ENCODE measurements at regions of chr12 and their contacts with region 1.

Region 1: GRCh38 chr12:110896559-110896958 is 23.8 kb downstream of the MYL2 start:
- DNase-seq: no peak
- ATAC-seq: no peak
- H3K4me3 ChIP-seq: no peak overlapping the region
- H3K27ac ChIP-seq: no peak overlapping the region; a peak in 1 of 6 replicates
- H3K4me1 ChIP-seq: peaks cover 9% of the 10 kb centered on the region
- CTCF ChIP-seq: no peak
- EP300 ChIP-seq: no peak
- POLR2A ChIP-seq: no peak
- RAD21 ChIP-seq: no peak

Region 2: GRCh38 chr12:110826592-110827200 is 69.9 kb before region 1 on chr12:
- CTCF ChIA-PET with region 1: no interaction called
- POLR2A ChIA-PET with region 1: no interaction called
- DNase-seq: peak; percentile 78 to 94
- ATAC-seq: peak; percentile 95 to 98
- H3K4me3 ChIP-seq: no peak overlapping the region
- H3K27ac ChIP-seq: peak overlapping the region in 1 of 2 experiments; percentile 64; a peak in 1 of 6 replicates
- H3K4me1 ChIP-seq: no peaks in the 10 kb centered on the region
- CTCF ChIP-seq: peak; percentile 95
- EP300 ChIP-seq: no peak
- POLR2A ChIP-seq: no peak
- RAD21 ChIP-seq: peak; percentile 92 to 98

Region 3: GRCh38 chr12:110917466-110917865 is 20.9 kb after region 1 on chr12:
- CTCF ChIA-PET with region 1: interaction called, 10 read pairs
- POLR2A ChIA-PET with region 1: no interaction called
- DNase-seq: peak; percentile 70 to 82
- ATAC-seq: peak; percentile 80 to 85
- H3K4me3 ChIP-seq: no peak overlapping the region
- H3K27ac ChIP-seq: peak overlapping the region; percentile 69 to 84; a peak in 5 of 6 replicates
- H3K4me1 ChIP-seq: peaks cover 27% of the 10 kb centered on the region
- CTCF ChIP-seq: no peak
- EP300 ChIP-seq: no peak
- POLR2A ChIP-seq: no peak
- RAD21 ChIP-seq: no peak

Region 4: DNA sequence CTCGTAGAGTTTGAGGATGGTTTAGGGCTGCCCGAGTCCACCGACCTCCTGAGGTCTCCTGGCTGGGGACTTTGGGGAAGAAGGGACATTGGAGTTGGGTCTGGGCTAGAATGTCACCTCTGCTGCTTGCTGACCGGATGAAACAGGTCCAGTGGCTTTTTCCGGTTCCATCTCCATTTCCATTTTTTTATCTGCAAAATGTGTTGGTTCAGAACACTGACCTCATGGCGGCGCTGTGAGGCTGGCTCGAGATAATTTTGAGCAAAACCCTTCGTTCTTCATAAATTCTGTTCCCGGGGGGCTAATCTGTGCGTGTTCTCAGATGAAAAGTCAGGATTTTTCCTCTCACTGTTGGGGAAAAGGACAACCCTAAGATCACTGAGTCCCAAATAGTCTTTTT is 35.5 kb after region 1 on chr12:
- CTCF ChIA-PET with region 1: interaction called, 71 read pairs
- POLR2A ChIA-PET with region 1: no interaction called
- DNase-seq: peak in 1 of 2 experiments; percentile 23
- ATAC-seq: no peak
- H3K4me3 ChIP-seq: no peak overlapping the region
- H3K27ac ChIP-seq: peak overlapping the region; percentile 14 to 37; a peak in 2 of 6 replicates
- H3K4me1 ChIP-seq: peaks cover 28% of the 10 kb centered on the region
- CTCF ChIP-seq: peak; percentile 50
- EP300 ChIP-seq: no peak
- POLR2A ChIP-seq: no peak
- RAD21 ChIP-seq: peak; percentile 28 to 44; a peak in 3 of 5 replicates

Region 5: DNA sequence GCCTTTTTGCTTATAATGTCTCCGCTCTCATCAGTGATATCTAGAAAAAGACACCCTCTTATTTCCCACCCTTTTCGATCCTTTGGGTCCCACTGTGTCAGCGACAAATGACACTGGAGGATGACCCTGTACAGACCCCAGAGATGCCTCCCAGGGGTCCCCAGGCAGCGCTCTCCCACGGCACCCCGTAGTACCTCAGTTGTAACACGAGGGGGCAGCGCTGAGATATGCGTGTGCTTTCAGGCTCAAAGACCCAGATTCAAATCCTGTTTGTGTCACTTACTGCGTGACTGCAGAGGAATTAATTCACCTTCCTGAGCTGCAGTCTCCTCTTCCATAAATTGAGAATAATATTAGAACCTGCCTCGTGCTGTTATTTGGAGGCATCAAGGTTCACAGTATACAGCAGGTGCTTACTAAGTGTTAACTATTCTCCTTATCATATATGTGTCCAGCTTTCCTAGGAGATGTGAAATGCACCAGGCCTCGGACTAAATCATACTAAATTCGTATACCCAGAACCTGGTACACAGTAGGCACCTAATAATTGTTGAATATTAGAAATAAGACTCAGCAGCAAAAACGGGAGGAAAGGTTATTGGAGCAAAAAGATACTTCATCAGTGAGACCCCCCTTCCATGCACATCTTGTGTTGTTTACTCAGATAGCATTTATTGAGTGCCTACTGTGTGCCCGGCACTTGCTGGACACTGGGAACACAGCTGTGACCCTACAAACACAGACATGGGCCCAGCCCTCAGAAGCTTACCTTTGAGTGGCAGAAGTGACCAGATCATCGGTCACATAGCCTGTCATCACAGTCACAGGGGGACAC is 372.4 kb after region 1 on chr12:
- CTCF ChIA-PET with region 1: interaction called, 22 read pairs
- POLR2A ChIA-PET with region 1: no interaction called
- DNase-seq: no peak
- ATAC-seq: peak in 1 of 2 experiments; percentile 43; a peak in 2 of 6 replicates
- H3K4me3 ChIP-seq: no peak overlapping the region
- H3K27ac ChIP-seq: no peak overlapping the region
- H3K4me1 ChIP-seq: peaks cover 8% of the 10 kb centered on the region; the same call in 1 of the 3 replicates
- CTCF ChIP-seq: peak; percentile 48
- EP300 ChIP-seq: no peak
- POLR2A ChIP-seq: no peak
- RAD21 ChIP-seq: peak in 1 of 2 experiments; percentile 54; a peak in 3 of 5 replicates

Region 6: DNA sequence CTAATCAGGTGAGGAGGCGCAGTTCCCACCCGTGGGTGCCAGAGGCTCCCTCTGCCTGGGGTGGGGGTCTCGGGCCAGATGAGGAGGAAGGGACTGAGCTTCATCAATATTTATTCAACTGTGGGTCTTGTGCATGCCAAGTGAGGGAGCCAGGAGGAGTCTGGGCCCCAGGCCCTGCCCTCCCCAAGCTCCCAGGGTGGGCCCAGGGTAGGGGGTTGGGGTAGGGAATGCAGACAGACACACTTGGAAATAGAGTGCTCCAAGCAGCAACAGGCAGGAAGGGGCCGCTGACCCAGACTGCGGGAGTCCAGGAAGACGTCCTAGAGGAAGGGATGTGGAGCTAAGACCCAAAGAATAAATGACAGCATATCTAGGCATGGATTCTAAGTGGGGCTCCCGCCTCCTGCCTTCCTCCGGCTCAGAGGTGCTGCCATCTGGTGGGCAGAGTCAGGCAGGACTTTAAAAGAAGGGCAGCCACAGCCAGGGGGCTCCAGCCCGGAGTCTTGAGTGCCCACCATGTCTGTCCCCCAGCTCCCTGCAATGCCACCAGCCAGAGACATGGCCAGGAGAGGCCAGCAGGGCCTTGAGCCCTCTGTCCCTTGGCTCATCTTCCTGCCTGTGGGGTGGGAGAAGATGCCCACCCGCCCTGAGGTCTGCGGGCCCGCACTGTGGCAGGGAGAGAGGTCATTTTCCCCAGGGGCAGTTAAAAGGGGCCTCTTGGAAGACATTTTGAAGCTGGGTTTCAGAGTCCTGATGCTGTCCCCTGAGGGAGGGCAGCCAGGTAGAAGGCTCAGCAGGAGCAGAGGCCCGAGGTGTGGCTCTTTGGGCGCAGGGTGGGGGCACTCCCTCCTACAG is 402.2 kb after region 1 on chr12:
- CTCF ChIA-PET with region 1: interaction called, 52 read pairs
- POLR2A ChIA-PET with region 1: no interaction called
- DNase-seq: peak; percentile 64 to 74
- ATAC-seq: peak; percentile 85 to 95
- H3K4me3 ChIP-seq: no peak overlapping the region
- H3K27ac ChIP-seq: no peak overlapping the region
- H3K4me1 ChIP-seq: no peaks in the 10 kb centered on the region
- CTCF ChIP-seq: peak; percentile 85
- EP300 ChIP-seq: no peak
- POLR2A ChIP-seq: no peak
- RAD21 ChIP-seq: peak; percentile 67 to 79

Region 7: DNA sequence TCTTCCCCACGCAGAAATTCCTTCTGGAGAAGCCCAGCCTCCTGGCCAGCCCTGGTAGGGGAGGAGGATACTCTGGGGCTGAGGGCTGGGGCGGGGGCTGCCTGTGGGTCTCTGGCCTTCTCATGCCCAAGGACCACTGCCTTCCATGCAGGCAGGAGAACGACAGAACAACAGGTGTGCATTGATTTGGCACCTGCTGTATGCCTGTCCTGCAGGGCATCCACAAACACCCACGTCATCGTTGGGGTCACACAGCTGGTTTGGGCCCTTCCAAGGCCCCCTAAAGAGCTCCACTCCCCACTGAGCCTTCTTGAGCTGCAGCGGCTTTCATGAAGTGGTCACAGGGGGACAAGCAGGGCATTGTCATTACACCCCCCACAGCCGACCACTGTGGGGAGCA is 411.9 kb after region 1 on chr12:
- CTCF ChIA-PET with region 1: interaction called, 27 read pairs
- POLR2A ChIA-PET with region 1: no interaction called
- DNase-seq: no peak
- ATAC-seq: no peak
- H3K4me3 ChIP-seq: no peak overlapping the region
- H3K27ac ChIP-seq: no peak overlapping the region
- H3K4me1 ChIP-seq: no peaks in the 10 kb centered on the region
- CTCF ChIP-seq: no peak
- EP300 ChIP-seq: no peak
- POLR2A ChIP-seq: no peak
- RAD21 ChIP-seq: no peak

Region 8: GRCh38 chr12:111313833-111314259 is 417.3 kb after region 1 on chr12:
- CTCF ChIA-PET with region 1: interaction called, 27 read pairs
- POLR2A ChIA-PET with region 1: interaction called, 3 read pairs
- DNase-seq: peak; percentile 76 to 95
- ATAC-seq: peak; percentile 78 to 88
- H3K4me3 ChIP-seq: no peak overlapping the region
- H3K27ac ChIP-seq: no peak overlapping the region
- H3K4me1 ChIP-seq: no peaks in the 10 kb centered on the region
- CTCF ChIP-seq: peak; percentile 87
- EP300 ChIP-seq: no peak
- POLR2A ChIP-seq: no peak
- RAD21 ChIP-seq: peak; percentile 81 to 92